GM10248 (cell line): ENCODE measurements at regions of chr17 and their contacts with region 1.

Region 1: GRCh38 chr17:48636177-48637018 is 10.2 kb upstream of the HOXB9 start:
- DNase-seq: peak; percentile 82
- CTCF ChIP-seq: peak; percentile 78

Region 2: GRCh38 chr17:48505787-48506645 is 130.4 kb before region 1 on chr17:
- CTCF ChIA-PET with region 1: no interaction called
- POLR2A ChIA-PET with region 1: no interaction called
- DNase-seq: peak; percentile 66
- CTCF ChIP-seq: no peak

Region 3: GRCh38 chr17:48646183-48647102 is 10.0 kb after region 1 on chr17:
- CTCF ChIA-PET with region 1: interaction called, 25 read pairs
- POLR2A ChIA-PET with region 1: no interaction called
- DNase-seq: peak; percentile 67
- CTCF ChIP-seq: no peak